ENCODE measurements at regions of chr5 and their contacts with region 1.

Region 1: DNA sequence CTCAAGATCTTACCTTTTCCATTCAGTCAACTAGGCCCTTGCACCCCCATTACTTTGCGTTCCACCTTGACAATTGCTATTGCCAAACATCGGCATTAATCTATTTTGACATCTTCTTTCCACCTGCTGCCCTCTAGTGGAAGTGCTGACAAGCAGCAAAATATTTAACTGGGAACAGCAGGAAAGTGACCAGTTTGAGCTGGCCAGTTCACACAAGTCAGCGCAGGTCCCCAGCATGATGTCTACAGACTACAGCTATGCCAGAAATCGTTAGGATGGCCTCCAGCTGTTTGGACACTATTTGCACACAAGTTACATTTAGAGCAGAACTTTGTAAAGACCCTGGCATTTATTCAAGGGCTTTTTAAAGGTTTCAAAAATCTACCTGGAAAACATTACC is 160.1 kb downstream of the GHR start:
- DNase-seq: peak; percentile 41 to 81 (median 47)
- H3K4me3 ChIP-seq: no peak overlapping the region
- H3K27ac ChIP-seq: no peak overlapping the region
- H3K4me1 ChIP-seq: peaks cover 14 to 22% of the 10 kb centered on the region in 2 donors
- H3K27me3 ChIP-seq: no peaks in the 10 kb centered on the region
- CTCF ChIP-seq: peak; percentile 59 to 80 (median 76)
- POLR2A ChIP-seq: no peak

Region 2: GRCh38 chr5:42306287-42306686 is 277.0 kb before region 1 on chr5:
- intact Hi-C with region 1: no loop called
- DNase-seq: no peak
- H3K4me3 ChIP-seq: no peak overlapping the region
- H3K27ac ChIP-seq: no peak overlapping the region
- H3K4me1 ChIP-seq: no peaks in the 10 kb centered on the region
- H3K27me3 ChIP-seq: no peaks in the 10 kb centered on the region
- CTCF ChIP-seq: no peak
- POLR2A ChIP-seq: no peak

Region 3: GRCh38 chr5:42423285-42424165 is 159.8 kb before region 1 on chr5 and contains the start of gene GHR:
- intact Hi-C with region 1: loop called (anchors 10 kb)
- DNase-seq: peak; percentile 82 to 94 (median 91)
- H3K4me3 ChIP-seq: peak within 1 kb of the TSS; percentile 34 to 69 (median 52)
- H3K27ac ChIP-seq: peak within 1 kb of the TSS in 4 of 5 donors; percentile 30 to 93 (median 76)
- H3K4me1 ChIP-seq: peaks cover 5 to 14% of the 10 kb centered on the region in 2 donors
- H3K27me3 ChIP-seq: no peaks in the 10 kb centered on the region
- CTCF ChIP-seq: peak; percentile 53 to 95 (median 84)
- POLR2A ChIP-seq: peak in 1 of 2 donors; percentile 19
- total RNA-seq, gene GHR: 8.2 to 17.1 (median 12.1) TPM

Region 4: GRCh38 chr5:42595597-42595996 is 12.3 kb after region 1 on chr5:
- intact Hi-C with region 1: no loop called
- DNase-seq: no peak
- H3K4me3 ChIP-seq: no peak overlapping the region
- H3K27ac ChIP-seq: no peak overlapping the region
- H3K4me1 ChIP-seq: peaks cover 6 to 16% of the 10 kb centered on the region in 2 donors
- H3K27me3 ChIP-seq: no peaks in the 10 kb centered on the region
- CTCF ChIP-seq: no peak
- POLR2A ChIP-seq: no peak

Region 5: DNA sequence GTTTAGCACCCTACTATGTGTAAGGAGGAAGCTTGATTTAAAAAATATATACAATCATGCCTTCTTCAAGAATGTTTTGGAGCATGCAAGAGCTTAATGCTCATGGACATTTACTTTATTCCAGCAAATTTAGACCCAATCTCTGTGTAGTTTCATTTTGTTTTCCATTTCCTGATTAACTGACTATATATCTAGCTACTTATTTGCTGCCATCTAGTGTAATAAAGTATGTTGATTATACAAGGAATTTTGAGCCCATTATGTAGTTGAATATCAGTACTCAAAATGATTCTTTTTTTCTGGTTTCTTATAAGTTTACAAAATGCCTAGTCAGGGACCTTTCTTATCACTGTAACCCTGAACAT is 73.3 kb after region 1 on chr5:
- intact Hi-C with region 1: loop called in 1 of 2 experiments (anchors 10 kb)
- DNase-seq: no peak
- H3K4me3 ChIP-seq: peak overlapping the region in 1 of 4 donors; percentile 46
- H3K27ac ChIP-seq: no peak overlapping the region
- H3K4me1 ChIP-seq: peaks cover 0 to 11% of the 10 kb centered on the region in 2 donors
- H3K27me3 ChIP-seq: no peaks in the 10 kb centered on the region
- CTCF ChIP-seq: peak; percentile 11 to 62 (median 49)
- POLR2A ChIP-seq: no peak